CD4-positive, alpha-beta T cell (primary cell): ENCODE measurements at regions of chr1 and their contacts with region 1.

Region 1: DNA sequence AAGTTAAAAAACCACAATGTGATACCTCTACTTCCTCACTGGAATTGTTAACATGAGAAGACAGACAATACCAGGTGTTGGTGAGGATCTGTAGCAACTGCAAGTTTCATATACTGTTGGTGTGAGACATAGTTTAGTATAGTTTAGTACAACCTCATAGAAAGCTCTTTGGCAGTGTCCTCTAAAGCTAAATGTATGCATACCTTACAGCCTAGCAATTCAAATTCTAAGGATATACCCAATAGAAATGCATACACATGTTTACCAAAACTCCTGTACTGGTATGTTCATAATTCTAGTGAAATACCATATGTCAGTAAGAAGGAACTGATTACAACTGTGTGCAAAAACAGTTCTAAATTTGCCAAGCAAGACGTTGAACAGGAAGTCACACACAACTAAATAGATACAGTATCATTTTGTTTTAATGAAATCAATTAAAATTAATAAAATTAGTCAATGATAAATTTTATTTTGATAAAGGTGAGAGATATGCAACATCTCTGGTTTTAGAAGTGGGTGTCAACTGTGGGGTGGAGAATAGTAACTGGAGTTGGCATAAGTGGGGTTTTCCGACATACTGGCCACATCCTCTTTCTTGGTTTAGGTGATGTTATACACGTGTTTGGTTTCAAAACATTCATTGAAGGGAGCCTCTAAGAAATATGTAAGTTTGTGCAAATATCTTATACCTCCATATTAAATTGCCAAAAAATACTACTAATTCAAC is 450.7 kb downstream of the PTPRC start:
- DNase-seq: peak in 8 of 14 experiments; percentile 8 to 83 (median 20)
- ATAC-seq: peak; percentile 98
- H3K4me3 ChIP-seq: no peak overlapping the region
- H3K4me3 Mint-ChIP-seq: no peak overlapping the region
- H3K27ac ChIP-seq: no peak overlapping the region
- H3K27ac Mint-ChIP-seq: no peak overlapping the region
- H3K4me1 ChIP-seq: no peaks in the 10 kb centered on the region
- H3K4me1 Mint-ChIP-seq: peaks cover 23% of the 10 kb centered on the region
- H3K27me3 ChIP-seq: no peaks in the 10 kb centered on the region
- H3K27me3 Mint-ChIP-seq: no peaks in the 10 kb centered on the region
- CTCF ChIP-seq: no peak

Region 2: GRCh38 chr1:198399452-198399851 is 690.1 kb before region 1 on chr1:
- CTCF ChIA-PET with region 1: no interaction called
- POLR2A ChIA-PET with region 1: no interaction called
- intact Hi-C with region 1: no loop called
- DNase-seq: no peak
- ATAC-seq: no peak
- H3K4me3 ChIP-seq: no peak overlapping the region
- H3K4me3 Mint-ChIP-seq: no peak overlapping the region
- H3K27ac ChIP-seq: no peak overlapping the region
- H3K27ac Mint-ChIP-seq: no peak overlapping the region
- H3K4me1 ChIP-seq: no peaks in the 10 kb centered on the region
- H3K4me1 Mint-ChIP-seq: no peaks in the 10 kb centered on the region
- H3K27me3 ChIP-seq: no peaks in the 10 kb centered on the region
- H3K27me3 Mint-ChIP-seq: peaks cover 24% of the 10 kb centered on the region
- CTCF ChIP-seq: no peak

Region 3: GRCh38 chr1:199265336-199265735 is 175.8 kb after region 1 on chr1:
- CTCF ChIA-PET with region 1: no interaction called
- POLR2A ChIA-PET with region 1: no interaction called
- intact Hi-C with region 1: loop called in 1 of 2 experiments (anchors 5 kb)
- DNase-seq: no peak
- ATAC-seq: no peak
- H3K4me3 ChIP-seq: no peak overlapping the region
- H3K4me3 Mint-ChIP-seq: no peak overlapping the region
- H3K27ac ChIP-seq: no peak overlapping the region
- H3K27ac Mint-ChIP-seq: no peak overlapping the region
- H3K4me1 ChIP-seq: no peaks in the 10 kb centered on the region
- H3K4me1 Mint-ChIP-seq: no peaks in the 10 kb centered on the region
- H3K27me3 ChIP-seq: no peaks in the 10 kb centered on the region
- H3K27me3 Mint-ChIP-seq: no peaks in the 10 kb centered on the region
- CTCF ChIP-seq: no peak